ENCODE measurements at regions of chr6 and their contacts with region 1.

Region 1: GRCh38 chr6:146950351-146950835 is 253.8 kb upstream of the STXBP5 start:
- DNase-seq: peak; percentile 65
- H3K4me3 Mint-ChIP-seq: no peak overlapping the region
- H3K27ac Mint-ChIP-seq: peak overlapping the region; percentile 50
- H3K4me1 Mint-ChIP-seq: peaks cover 9% of the 10 kb centered on the region
- H3K27me3 Mint-ChIP-seq: no peaks in the 10 kb centered on the region

Region 2: DNA sequence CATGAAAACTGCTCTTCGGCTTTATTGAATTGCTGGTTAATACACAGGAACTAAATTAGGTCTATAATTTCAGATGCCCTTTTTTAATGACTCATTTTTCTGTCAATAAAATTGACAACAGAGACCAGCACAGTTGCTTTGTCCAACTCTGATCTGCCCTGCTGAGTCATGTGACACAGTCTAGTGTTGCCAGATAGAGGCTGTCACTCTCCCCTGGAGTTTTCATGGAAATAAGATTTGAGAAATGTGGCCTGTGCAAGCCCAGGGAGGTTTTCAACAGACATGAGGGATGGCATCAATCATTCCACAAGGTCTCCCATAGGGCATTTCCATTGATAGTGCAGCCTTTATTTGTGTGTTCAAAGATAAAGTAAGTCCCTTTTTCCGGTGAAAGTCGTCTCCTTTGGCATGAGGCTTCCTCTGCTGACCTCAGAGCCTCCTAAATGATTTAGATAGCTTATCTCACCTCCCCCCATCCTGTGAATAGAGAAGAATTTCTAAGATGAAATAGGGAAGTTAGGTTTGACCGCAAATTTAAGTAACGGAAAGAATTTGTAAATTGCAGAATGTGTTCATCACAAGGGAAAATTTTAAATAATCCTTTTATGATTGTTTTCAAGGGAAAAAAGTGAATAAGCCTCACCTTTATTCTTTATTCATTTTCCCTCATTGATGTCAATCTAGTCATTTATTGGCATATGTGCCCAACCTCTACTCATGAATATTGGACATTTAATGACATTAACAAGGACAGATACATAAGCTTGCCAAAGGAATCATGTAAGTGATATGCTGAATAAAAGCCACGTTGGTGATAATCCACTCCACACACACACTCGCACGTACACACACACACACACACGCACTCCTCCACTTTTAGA is 73.9 kb before region 1 on chr6:
- intact Hi-C with region 1: loop called (anchors 5 kb)
- DNase-seq: no peak
- H3K4me3 Mint-ChIP-seq: peak overlapping the region; percentile 24
- H3K27ac Mint-ChIP-seq: peak overlapping the region; percentile 83
- H3K4me1 Mint-ChIP-seq: peaks cover 16% of the 10 kb centered on the region
- H3K27me3 Mint-ChIP-seq: no peaks in the 10 kb centered on the region

Region 3: GRCh38 chr6:146915671-146916127 is 34.7 kb before region 1 on chr6:
- intact Hi-C with region 1: loop called (anchors 1 kb)
- DNase-seq: no peak
- H3K4me3 Mint-ChIP-seq: no peak overlapping the region
- H3K27ac Mint-ChIP-seq: no peak overlapping the region
- H3K4me1 Mint-ChIP-seq: peaks cover 11% of the 10 kb centered on the region
- H3K27me3 Mint-ChIP-seq: no peaks in the 10 kb centered on the region

Measured in activated CD4-positive, alpha-beta T cell treated with anti-CD3 and anti-CD28 coated beads, Interleukin-2, amount 10 ng/mL, durations not matched to agents 24 days and 14 days (primary cell).